Activated B cell treated with CpG ODN at 0.5 μM for 24 hours (primary cell): ENCODE measurements at regions of chr11 and their contacts with region 1.

Region 1: GRCh38 chr11:34051349-34052035 is at the start of gene CAPRIN1:
- DNase-seq: peak; percentile 87
- ATAC-seq: peak; percentile 73
- H3K4me3 Mint-ChIP-seq: peak within 1 kb of the TSS; percentile 99
- H3K27ac Mint-ChIP-seq: peak within 1 kb of the TSS; percentile 98
- H3K4me1 Mint-ChIP-seq: peaks cover 37% of the 10 kb centered on the region
- H3K27me3 Mint-ChIP-seq: no peaks in the 10 kb centered on the region
- CTCF ChIP-seq: no peak
- total RNA-seq, gene CAPRIN1: 152 and 158 TPM in 2 replicates

Region 2: GRCh38 chr11:33257897-33258630 is 793.4 kb before region 1 on chr11:
- CTCF ChIA-PET with region 1: no interaction called
- POLR2A ChIA-PET with region 1: no interaction called
- intact Hi-C with region 1: loop called (anchors 5 kb)
- DNase-seq: peak; percentile 64
- ATAC-seq: peak; percentile 37
- H3K4me3 Mint-ChIP-seq: peak overlapping the region; percentile 97
- H3K27ac Mint-ChIP-seq: peak overlapping the region; percentile 98
- H3K4me1 Mint-ChIP-seq: peaks cover 46% of the 10 kb centered on the region
- H3K27me3 Mint-ChIP-seq: no peaks in the 10 kb centered on the region
- CTCF ChIP-seq: no peak

Region 3: DNA sequence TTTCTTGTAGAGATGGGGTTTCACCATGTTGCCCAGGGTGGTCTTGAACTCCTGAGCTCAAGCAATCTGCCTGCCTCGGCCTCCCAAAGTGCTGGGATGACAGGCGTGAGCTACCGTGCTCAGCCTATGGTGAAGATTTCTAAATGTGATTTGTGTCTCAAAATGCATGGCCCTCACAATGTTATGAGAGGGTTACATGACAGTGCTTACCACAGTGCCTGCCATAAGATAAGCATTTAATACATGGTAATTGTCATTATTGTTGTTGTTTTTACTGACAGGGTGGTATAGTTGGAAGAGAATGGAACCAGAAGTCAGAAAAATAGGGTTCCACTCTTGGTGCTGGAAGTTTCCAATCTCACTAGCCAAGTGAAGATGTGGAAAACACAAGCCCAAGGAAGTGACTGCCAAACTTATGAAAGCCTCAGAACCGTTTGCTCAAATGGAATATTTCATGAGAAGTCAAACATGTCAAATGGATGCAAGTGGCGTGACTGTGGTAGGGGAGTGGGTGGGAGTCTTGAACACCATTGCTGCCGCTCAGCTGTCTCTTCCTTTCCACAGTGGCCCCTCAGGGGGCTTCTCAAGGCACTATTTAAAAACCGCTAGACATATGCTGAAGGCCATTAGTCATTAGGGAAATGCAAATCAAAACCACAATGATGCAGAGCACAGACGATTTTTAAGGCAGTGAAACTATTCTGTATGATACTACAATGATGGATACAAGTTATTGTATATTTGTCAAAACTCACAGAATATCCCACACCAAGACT is 130.5 kb before region 1 on chr11:
- CTCF ChIA-PET with region 1: no interaction called
- POLR2A ChIA-PET with region 1: no interaction called
- intact Hi-C with region 1: loop called (anchors 1 kb)
- DNase-seq: peak; percentile 44
- ATAC-seq: peak; percentile 97
- H3K4me3 Mint-ChIP-seq: peak overlapping the region; percentile 47
- H3K27ac Mint-ChIP-seq: peak overlapping the region; percentile 70
- H3K4me1 Mint-ChIP-seq: peaks cover 26% of the 10 kb centered on the region
- H3K27me3 Mint-ChIP-seq: peaks cover 28% of the 10 kb centered on the region
- CTCF ChIP-seq: no peak

Region 4: GRCh38 chr11:34086554-34087283 is 35.2 kb after region 1 on chr11:
- CTCF ChIA-PET with region 1: no interaction called
- POLR2A ChIA-PET with region 1: interaction called, 4 read pairs
- intact Hi-C with region 1: loop called (anchors 5 kb)
- DNase-seq: no peak
- ATAC-seq: peak; percentile 10
- H3K4me3 Mint-ChIP-seq: no peak overlapping the region
- H3K27ac Mint-ChIP-seq: no peak overlapping the region
- H3K4me1 Mint-ChIP-seq: peaks cover 5% of the 10 kb centered on the region
- H3K27me3 Mint-ChIP-seq: no peaks in the 10 kb centered on the region
- CTCF ChIP-seq: no peak

Region 5: DNA sequence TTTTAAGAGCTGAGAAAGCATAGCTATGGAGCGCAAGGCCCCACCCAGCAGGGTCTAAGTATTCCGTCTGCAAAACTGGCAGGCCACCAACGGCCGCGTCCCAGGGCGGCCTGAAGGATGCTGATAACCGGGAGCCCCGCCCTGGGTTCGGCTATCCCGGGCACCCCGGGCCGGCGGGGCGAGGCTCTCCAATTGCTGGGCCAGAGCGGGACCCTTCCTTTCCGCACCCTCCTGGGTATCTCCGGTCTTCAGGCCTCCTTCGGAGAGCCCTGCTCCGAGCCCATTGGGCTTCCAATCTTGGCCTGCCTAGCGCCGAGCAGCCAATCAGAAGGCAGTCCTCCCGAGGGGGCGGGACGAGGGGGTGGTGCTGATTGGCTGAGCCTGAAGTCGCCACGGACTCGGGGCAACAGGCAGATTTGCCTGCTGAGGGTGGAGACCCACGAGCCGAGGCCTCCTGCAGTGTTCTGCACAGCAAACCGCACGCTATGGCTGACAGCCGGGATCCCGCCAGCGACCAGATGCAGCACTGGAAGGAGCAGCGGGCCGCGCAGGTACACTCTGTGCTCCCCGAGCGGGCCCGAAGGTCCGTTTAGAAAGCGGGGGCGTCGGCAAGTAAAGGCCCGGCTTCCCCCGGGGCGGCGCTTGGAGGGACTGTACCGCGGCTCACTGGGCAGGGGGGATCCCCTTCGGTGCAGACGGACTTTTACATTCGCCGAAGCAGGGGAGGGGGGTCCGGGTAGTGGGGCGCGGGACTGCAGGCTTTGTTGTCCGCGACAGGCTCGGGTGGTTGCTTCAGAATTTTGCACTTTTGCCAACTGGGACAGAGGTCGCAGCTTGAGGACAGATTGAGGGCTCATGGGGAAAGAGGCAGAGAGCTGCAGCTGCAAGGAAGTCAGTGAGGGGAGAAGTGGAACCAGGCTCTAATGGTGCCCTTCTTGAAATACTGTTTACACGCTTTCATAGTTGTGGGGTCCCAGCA is 387.3 kb after region 1 on chr11 and contains the start of gene CAT:
- CTCF ChIA-PET with region 1: no interaction called
- POLR2A ChIA-PET with region 1: interaction called, 3 read pairs
- intact Hi-C with region 1: loop called (anchors 1 kb)
- DNase-seq: peak; percentile 96
- ATAC-seq: peak; percentile 90
- H3K4me3 Mint-ChIP-seq: peak within 1 kb of the TSS; percentile 99
- H3K27ac Mint-ChIP-seq: peak within 1 kb of the TSS; percentile 98
- H3K4me1 Mint-ChIP-seq: peaks cover 43% of the 10 kb centered on the region
- H3K27me3 Mint-ChIP-seq: no peaks in the 10 kb centered on the region
- CTCF ChIP-seq: no peak
- total RNA-seq, gene CAT: 79.8 and 81.2 TPM in 2 replicates